ENCODE measurements at regions of chrX and their contacts with region 1.

Region 1: DNA sequence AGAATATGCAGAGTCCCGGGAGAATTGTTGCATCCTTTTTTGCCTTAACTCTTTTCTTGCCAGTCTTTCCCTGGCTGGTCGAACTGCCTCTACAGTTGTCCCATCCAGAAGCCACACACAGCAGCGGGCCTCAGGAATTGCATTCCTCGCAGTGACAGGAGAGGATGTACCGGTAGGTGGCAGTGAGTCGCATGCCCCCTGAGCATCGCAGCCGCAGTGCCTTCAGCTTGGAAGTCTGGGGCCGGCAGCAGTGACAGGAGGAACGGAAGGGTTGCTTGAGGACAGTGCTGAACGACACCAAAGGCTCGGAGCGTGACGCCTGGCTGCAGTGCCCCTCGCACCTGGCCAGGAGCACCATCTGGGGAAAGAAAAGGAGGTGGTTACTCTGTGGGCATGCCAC is 23.5 kb downstream of the NDP start:
- DNase-seq: peak; percentile 40 to 48
- ATAC-seq: peak; percentile 90 to 93
- H3K4me3 ChIP-seq: no peak overlapping the region
- H3K27ac ChIP-seq: no peak overlapping the region
- H3K4me1 ChIP-seq: no peaks in the 10 kb centered on the region
- CTCF ChIP-seq: peak; percentile 44
- EP300 ChIP-seq: no peak
- POLR2A ChIP-seq: no peak
- RAD21 ChIP-seq: peak; percentile 23 to 38; a peak in 1 of 5 replicates

Region 2: GRCh38 chrX:43849173-43849572 is 100.5 kb before region 1 on chrX:
- CTCF ChIA-PET with region 1: no interaction called
- POLR2A ChIA-PET with region 1: no interaction called
- DNase-seq: no peak
- ATAC-seq: no peak
- H3K4me3 ChIP-seq: no peak overlapping the region
- H3K27ac ChIP-seq: no peak overlapping the region
- H3K4me1 ChIP-seq: no peaks in the 10 kb centered on the region
- CTCF ChIP-seq: no peak
- EP300 ChIP-seq: no peak
- POLR2A ChIP-seq: no peak
- RAD21 ChIP-seq: no peak

Region 3: GRCh38 chrX:44244008-44244407 is 294.3 kb after region 1 on chrX:
- CTCF ChIA-PET with region 1: interaction called, 33 read pairs
- POLR2A ChIA-PET with region 1: no interaction called
- DNase-seq: peak in 1 of 2 experiments; percentile 35
- ATAC-seq: no peak
- H3K4me3 ChIP-seq: no peak overlapping the region
- H3K27ac ChIP-seq: no peak overlapping the region
- H3K4me1 ChIP-seq: no peaks in the 10 kb centered on the region
- CTCF ChIP-seq: peak; percentile 54
- EP300 ChIP-seq: no peak
- POLR2A ChIP-seq: no peak
- RAD21 ChIP-seq: peak; percentile 68 to 74